ENCODE measurements at regions of chr1 and their contacts with region 1.

Region 1: GRCh38 chr1:44594871-44595746 is 79.2 kb downstream of the TMEM53 start:
- DNase-seq: peak; percentile 78 to 90 (median 88)
- ATAC-seq: peak; percentile 95
- H3K4me3 ChIP-seq: no peak overlapping the region
- H3K4me1 ChIP-seq: no peaks in the 10 kb centered on the region
- CTCF ChIP-seq: peak; percentile 94

Region 2: DNA sequence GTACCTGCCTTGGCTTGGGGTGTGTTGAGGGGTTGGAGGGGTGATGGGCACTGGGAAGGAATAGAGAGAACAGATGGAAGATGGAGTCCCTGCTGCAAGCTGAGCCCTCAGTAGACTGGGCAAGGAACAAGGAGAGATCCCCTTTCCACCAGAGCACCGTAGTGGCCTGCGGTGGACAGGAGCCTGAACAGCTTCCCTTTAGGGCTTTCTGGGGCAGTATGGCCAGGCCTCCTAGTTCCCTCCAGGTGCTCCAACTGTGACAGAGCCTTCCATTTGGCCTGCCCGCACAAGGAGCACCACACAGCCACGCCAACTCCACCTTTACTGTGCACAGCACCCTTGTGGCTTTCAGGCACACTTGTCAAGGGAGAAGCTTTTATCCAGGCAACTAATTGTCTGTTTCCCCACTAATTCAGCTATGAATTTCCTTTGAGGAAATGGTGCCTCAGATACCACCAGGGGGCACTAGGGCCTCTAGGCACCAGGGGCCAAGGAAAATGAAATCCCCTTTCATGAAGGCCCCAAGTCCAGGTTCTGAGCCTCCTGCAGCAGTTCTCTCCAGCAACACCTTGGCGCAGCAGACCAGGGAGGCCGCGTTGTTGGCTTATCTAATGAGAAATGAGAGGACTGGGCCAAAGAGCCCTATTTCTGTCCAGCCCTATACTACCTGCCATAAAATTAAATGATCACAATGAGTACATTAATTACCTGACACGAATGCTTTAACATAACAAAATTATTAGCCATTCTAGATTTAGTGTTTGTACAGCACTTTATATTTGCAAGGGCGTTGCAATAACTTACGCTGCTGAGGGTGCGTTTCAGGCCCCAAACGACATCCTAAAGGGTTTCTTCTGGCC is 217.0 kb before region 1 on chr1:
- intact Hi-C with region 1: loop called (anchors 5 to 10 kb)
- DNase-seq: peak in 1 of 3 donors; percentile 63
- ATAC-seq: no peak
- H3K4me3 ChIP-seq: no peak overlapping the region
- H3K4me1 ChIP-seq: no peaks in the 10 kb centered on the region
- CTCF ChIP-seq: peak; percentile 29

Region 3: GRCh38 chr1:44543064-44543744 is 51.9 kb before region 1 on chr1:
- intact Hi-C with region 1: no loop called
- DNase-seq: no peak
- ATAC-seq: no peak
- H3K4me3 ChIP-seq: no peak overlapping the region
- H3K4me1 ChIP-seq: no peaks in the 10 kb centered on the region
- CTCF ChIP-seq: no peak